ENCODE measurements at regions of chr3 and their contacts with region 1.

Region 1: GRCh38 chr3:39180546-39181346 is 11.6 kb downstream of the XIRP1 start:
- DNase-seq: peak; percentile 88
- ATAC-seq: peak; percentile 89
- H3K4me3 Mint-ChIP-seq: peak overlapping the region; percentile 73
- H3K27ac Mint-ChIP-seq: peak overlapping the region; percentile 77
- H3K4me1 Mint-ChIP-seq: peaks cover 31% of the 10 kb centered on the region
- H3K27me3 Mint-ChIP-seq: no peaks in the 10 kb centered on the region
- CTCF ChIP-seq: no peak

Region 2: GRCh38 chr3:39101022-39101689 is 79.6 kb before region 1 on chr3:
- CTCF ChIA-PET with region 1: interaction called, 4 read pairs
- POLR2A ChIA-PET with region 1: interaction called, 3 read pairs
- intact Hi-C with region 1: loop called (anchors 1 kb)
- DNase-seq: no peak
- ATAC-seq: peak; percentile 90
- H3K4me3 Mint-ChIP-seq: no peak overlapping the region
- H3K27ac Mint-ChIP-seq: no peak overlapping the region
- H3K4me1 Mint-ChIP-seq: peaks cover 42% of the 10 kb centered on the region
- H3K27me3 Mint-ChIP-seq: no peaks in the 10 kb centered on the region
- CTCF ChIP-seq: peak; percentile 44

Region 3: DNA sequence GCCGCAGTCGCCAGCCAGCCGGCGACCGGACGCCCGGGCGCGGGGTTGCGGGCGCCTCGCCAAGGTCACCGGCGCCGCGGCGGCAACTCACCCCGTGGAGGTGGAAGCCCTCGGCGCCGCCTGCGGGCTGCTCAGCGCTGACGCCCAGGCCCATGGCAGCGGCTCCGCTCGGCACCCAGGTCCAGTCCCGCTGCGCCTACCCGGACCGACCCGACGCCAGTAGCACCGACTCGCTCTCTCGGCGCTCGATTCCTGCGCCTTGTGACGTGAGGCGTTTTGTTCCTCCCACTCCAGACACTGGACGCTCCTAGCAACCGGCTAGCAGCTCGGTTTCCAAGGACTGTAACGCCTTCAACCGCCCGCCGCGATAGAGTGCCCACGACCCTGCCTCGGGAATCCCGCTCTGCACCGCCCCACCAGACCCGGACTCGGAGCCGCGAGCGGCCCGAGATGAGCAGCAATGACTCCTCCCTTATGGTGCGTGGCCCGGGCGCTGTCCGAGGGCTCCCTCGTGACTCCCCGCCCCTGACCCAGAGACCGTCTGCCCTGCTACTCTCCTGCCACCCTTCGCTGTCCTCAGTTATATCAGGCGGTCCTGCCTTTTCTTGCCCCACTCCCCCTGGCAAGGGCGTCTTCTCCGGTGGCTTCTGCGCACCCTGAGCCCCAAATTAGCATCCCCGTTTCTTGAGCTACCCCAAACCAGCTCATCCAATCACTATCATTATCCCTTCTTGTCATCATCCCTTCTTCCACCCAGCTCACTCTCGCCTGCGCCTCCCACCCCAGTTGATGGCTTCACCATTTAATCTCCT is 73.2 kb before region 1 on chr3 and contains the starts of genes GORASP1 and TTC21A:
- CTCF ChIA-PET with region 1: no interaction called
- POLR2A ChIA-PET with region 1: interaction called, 10 read pairs
- intact Hi-C with region 1: loop called (anchors 1 kb)
- DNase-seq: peak; percentile 64
- ATAC-seq: peak; percentile 50
- H3K4me3 Mint-ChIP-seq: peak within 1 kb of the TSS; percentile 98
- H3K27ac Mint-ChIP-seq: peak within 1 kb of the TSS; percentile 91
- H3K4me1 Mint-ChIP-seq: peaks cover 62% of the 10 kb centered on the region
- H3K27me3 Mint-ChIP-seq: no peaks in the 10 kb centered on the region
- CTCF ChIP-seq: no peak
- total RNA-seq, gene GORASP1: 41.6 and 47.8 TPM in 2 replicates
- total RNA-seq, gene TTC21A: 11.4 and 15.9 TPM in 2 replicates

Region 4: DNA sequence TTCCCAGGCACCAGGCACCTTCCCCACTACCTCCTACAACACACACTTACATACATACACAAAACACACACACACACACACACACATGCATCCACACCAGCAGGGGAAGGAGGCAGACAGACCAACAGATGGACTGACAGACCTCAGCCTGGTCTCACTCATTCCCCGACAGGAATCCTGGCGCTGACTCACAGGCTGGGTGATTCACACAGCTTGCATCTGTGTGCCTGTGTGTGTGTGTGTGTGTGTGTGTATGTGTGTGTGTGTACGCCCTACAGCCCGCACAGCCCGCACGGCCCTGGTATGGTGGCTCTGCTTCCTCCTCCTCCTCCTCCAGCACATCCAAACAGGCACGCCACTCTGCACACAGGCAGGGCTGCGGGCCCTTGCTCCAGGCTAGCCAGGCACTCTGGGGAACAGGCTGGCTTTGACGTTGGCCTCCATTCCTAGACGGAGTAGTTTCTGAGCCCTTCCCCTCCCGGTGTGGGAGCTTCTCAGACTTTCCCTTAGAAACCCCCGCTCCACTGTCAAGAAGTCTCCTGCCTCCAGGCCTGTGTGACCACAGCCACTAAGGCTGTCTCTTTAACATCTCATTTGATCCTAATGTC is 33.7 kb before region 1 on chr3:
- CTCF ChIA-PET with region 1: no interaction called
- POLR2A ChIA-PET with region 1: interaction called, 14 read pairs
- intact Hi-C with region 1: no loop called
- DNase-seq: no peak
- ATAC-seq: peak; percentile 53
- H3K4me3 Mint-ChIP-seq: peak overlapping the region; percentile 98
- H3K27ac Mint-ChIP-seq: peak overlapping the region; percentile 99
- H3K4me1 Mint-ChIP-seq: peaks cover 81% of the 10 kb centered on the region
- H3K27me3 Mint-ChIP-seq: no peaks in the 10 kb centered on the region
- CTCF ChIP-seq: no peak

Region 5: DNA sequence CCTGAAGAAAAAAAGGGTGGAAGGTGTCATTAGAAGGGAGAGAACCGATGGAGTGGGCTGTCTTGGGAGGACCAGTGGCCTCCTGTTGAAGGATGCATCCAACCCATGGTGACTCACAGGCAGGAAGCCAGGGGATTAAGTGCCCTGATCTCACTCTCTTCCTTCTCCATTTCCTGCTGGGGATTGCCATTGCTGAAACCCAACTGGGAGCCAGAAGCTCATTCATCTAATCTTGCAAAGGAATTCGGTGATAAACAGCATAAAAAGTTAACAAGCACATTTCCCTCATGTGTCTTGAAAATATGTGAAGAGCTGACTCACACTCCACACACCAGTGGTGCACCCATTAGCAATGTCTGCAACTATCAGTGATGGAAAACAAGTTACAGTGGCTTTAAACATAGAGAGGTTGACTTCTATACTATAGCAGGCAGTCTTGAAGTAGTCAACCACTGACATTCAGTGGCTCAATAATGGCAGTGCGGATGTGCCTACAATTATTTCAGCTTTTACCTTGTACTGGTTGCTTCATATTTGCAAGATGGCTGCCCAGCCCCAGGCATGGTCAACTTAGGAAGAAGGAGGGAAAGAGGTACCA is 14.5 kb before region 1 on chr3:
- CTCF ChIA-PET with region 1: no interaction called
- POLR2A ChIA-PET with region 1: no interaction called
- intact Hi-C with region 1: no loop called
- DNase-seq: no peak
- ATAC-seq: no peak
- H3K4me3 Mint-ChIP-seq: no peak overlapping the region
- H3K27ac Mint-ChIP-seq: no peak overlapping the region
- H3K4me1 Mint-ChIP-seq: no peaks in the 10 kb centered on the region
- H3K27me3 Mint-ChIP-seq: no peaks in the 10 kb centered on the region
- CTCF ChIP-seq: no peak

Measured in activated B cell treated with CpG ODN at 0.5 μM for 24 hours (primary cell).